Esophagus muscularis mucosa (tissue), 4 donors: ENCODE measurements at regions of chr2 and their contacts with region 1.

Region 1: GRCh38 chr2:27771548-27772335 is at the start of gene MRPL33:
- DNase-seq: peak; percentile 99
- H3K4me3 ChIP-seq: peak within 1 kb of the TSS; percentile 68 to 77 (median 74)
- H3K27ac ChIP-seq: peak within 1 kb of the TSS; percentile 87 to 94 (median 88)
- H3K4me1 ChIP-seq: peaks cover 22 to 48% (median 47%) of the 10 kb centered on the region in 4 donors
- H3K27me3 ChIP-seq: no peaks in the 10 kb centered on the region
- CTCF ChIP-seq: no peak
- EP300 ChIP-seq: no peak
- POLR2A ChIP-seq: peak; percentile 62
- total RNA-seq, gene MRPL33: 283 to 500 (median 345) TPM

Region 2: DNA sequence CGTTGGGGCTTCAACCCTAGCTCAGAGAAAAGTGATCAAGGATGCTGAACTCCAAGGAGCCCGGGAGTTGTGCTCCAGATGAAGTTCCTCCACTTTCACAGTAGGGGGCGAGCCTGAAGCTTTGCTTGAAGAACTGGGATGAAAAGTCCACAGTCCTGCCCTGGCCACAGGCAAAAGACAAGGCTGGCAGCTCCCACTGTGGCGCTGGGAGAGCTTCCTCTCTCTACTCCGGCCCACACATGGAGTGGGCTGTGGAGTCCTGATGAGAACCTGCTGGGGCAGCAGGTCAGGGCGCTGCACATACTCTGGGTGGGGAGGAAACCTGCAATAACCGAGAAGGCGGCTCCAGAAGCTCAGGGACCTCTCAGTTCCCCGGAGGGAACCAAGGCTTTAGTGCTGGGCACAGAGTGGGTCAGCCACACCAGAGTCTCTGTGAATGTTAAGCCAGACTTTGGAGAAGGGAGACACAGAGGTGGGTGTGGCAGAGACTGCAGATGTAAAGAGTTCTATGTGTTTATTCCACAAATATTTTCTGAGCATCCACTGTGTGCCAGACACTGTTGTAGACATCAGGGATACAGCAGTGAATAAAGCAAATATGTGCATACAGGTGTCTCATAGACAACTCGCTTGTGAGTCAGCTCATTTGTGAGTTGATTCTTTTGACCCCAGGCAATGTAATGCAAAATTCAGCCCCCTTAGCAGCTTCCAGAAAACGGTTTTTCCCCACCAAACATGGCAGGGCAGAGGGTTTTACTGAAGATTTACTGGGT is 48.2 kb before region 1 on chr2:
- intact Hi-C with region 1: loop called (anchors 5 kb)
- DNase-seq: no peak
- H3K4me3 ChIP-seq: no peak overlapping the region
- H3K27ac ChIP-seq: peak overlapping the region; percentile 69 to 82 (median 77)
- H3K4me1 ChIP-seq: peaks cover 27 to 53% (median 37%) of the 10 kb centered on the region in 4 donors
- H3K27me3 ChIP-seq: no peaks in the 10 kb centered on the region
- CTCF ChIP-seq: peak; percentile 86 to 96 (median 88)
- EP300 ChIP-seq: no peak
- POLR2A ChIP-seq: no peak